Posterior cingulate gyrus (tissue), 11 donors: ENCODE measurements at regions of chr1 and their contacts with region 1.

Region 1: GRCh38 chr1:110203021-110203661 is 7.0 kb upstream of the KCNC4 start:
- DNase-seq: peak in 4 of 10 donors; percentile 42 to 84 (median 50)

Region 2: DNA sequence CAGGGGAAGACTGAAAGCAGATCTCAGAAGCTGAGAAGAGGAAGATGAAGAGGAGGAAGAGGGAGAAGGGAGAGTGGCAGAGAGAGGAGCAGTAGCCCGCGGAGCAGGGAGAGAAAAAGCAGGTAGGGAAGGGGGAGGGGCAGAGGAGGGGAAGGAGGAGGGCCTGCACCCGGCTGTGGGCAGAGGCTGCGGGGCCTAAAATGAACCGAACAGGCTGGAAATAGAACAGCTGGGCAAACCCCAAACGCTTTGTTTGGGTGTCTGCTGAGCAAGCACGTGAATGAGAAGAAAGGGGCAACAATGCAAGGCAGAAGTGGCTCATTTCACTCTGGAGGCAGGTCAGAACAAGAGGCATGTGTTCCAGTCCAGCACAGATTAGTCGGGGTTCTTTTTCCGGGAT is 40.4 kb after region 1 on chr1:
- intact Hi-C with region 1: no loop called
- DNase-seq: peak in 1 of 10 donors; percentile 79

Region 3: DNA sequence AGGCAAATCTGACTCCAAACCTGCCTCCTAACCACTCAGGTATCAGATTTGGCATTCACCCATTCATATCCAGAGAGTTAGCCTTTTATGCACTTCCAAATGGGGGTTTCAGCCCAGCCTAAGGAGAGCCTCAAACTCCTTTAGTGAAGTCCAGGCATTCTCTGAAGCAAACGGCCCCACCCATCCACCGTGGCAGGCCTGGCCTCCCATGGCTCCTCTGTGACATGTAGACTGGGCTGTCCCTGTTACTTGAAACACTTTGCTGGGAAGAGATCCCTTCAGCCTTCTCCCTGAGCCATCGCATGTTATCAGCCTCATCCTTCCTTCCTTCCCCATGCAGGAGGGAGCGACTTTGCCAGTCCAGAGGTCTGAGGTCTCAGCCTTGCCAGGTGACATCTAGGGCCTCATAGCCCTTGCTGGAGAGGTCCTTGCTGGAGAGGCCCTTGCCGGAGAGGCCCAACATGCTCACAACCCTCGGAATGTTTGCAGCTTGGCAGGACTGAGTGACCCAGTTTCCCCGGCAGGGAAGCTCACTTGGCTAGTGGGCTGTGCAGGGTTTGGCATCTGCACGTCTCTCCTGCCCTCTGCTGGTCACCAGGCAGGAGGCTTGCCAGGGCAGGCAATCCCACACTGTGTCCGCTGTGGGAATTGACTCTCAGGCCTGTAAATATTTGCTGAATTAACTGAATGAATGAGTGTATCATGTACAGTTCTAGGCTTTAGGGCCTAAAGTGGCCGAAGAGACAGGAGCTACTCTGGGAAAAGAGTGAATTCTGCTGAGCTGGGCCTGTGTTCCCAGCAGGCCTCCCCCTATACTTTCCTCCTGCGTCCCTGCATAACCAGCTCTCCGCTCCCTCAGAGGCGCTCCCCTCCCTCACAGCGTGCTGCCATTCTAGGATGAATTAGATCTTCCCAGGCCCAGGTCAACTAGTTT is 109.3 kb after region 1 on chr1:
- intact Hi-C with region 1: loop called (anchors 1 kb)
- DNase-seq: peak; percentile 75 to 98 (median 86)

Region 4: DNA sequence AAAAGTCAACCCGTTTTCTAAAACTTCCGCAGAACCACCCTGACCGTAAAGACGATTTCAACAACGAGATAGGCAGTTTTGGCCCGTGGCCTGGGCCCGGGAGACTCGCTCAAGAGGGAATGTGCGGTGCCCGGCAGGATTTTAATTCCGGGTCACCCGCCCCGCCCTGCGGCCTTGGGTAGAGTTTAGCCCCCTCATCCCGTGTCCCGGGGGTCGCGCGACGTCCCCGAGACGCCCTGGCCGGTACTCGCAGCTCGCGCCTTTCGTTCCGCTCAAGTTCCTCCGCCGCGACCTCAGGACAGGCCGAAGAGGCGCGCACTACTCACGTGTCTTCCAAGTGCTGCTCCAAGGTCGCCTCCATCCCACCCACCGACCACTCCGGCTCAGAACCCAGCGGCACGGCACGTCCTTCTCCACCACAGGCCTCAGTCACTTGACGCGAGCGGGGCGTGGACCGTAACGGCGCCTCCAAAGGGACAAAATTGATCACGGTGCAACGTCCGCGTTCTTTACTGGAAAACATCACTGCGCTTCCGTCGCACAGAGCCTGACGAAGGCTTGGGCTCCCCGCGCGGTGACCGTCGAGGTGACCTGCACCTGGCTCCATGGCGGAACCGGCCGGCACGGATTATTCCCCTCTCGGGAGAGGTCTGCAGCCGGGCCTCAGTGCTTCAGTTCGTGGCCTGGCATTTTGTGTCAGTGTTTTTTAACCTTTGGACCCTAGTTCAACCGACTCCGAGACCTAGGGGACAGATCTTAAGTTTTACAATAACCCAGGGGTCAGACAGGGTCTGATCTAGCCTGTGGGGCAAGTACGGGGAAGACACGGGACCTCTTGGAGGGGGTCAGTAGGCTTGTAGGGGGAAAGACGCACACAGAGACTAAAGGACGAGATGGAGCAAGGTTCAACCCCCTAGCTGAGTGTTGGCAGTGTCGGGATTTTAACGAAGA is 204.4 kb after region 1 on chr1 and contains the start of gene LAMTOR5:
- intact Hi-C with region 1: loop called (anchors 5 kb)
- DNase-seq: peak; percentile 89 to 99 (median 93)

Region 5: DNA sequence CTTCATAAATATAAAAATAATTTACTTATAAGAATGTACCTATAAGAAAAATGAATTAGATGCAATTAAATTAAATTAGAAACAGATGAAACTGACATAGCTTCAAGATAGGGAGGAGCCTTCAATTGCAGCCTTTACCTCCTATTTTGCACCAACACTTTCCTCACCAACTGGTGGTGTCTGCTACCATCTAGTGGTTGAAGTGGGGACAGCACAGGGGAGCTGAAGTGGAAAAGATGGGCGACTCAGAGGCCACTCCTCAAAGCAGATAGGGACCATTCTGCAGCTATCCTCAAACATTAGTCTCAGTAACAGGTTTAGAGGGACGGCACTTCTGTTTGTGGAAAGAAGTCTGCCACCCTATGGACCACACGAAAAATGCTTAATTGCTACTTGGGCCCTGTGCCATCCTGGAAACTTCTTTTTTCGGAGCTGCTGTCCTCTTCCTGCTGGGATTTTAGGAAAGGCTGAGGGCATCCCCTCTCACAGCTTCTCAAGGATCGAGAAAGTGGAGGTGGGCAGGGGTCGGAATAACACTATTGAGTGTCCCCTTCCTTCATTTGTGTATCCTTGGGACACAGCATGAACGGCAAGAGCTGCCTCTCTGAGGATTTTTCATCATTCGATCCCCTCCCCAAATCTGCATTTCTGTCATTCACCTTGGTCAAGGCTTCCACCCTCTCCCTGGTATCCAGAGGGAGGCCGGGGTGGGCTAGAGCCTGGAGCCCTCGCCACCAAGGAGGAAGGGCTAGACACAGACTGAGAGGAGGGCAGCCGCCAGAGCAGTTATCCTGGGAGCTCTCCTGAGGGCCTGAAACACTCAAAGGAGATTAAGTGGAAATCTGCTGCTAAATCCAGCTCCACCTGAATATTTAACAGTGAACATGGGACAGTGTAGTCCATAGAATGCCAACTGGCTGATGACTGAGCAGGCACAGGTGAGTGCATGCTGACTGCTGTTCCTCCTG is 257.4 kb after region 1 on chr1:
- intact Hi-C with region 1: loop called (anchors 1 kb)
- DNase-seq: peak in 8 of 10 donors; percentile 54 to 94 (median 85)

Region 6: DNA sequence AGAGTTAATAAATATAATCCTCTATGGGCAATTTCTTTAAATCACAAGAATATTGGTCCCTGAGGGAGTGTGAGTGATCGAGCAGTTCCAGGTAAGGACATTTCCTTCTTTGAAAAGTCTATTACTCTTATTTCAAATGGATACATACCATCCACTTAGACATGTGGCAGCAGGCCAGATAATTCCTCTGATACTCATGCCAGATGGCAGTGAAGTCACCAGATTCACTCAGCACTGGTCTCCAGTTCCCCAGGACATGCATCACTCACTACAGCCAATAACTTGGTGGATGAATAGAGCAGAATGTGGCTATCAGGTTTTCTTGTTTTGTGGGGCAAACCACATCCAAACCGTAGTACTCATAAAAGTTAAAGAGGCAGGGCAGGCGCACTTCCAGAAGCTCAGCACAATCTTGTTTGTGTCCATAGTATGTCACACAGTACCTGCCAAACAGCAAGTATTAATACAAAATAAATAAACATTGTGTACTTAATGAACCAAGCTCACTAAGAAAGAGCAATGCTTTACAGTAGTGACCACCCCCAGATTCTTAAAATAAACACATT is 595.6 kb after region 1 on chr1:
- intact Hi-C with region 1: no loop called
- DNase-seq: no peak